ENCODE measurements at regions of chr2 and their contacts with region 1.

Region 1: GRCh38 chr2:219177552-219178376 is at the start of gene RETREG2:
- DNase-seq: peak; percentile 61 to 96 (median 78)
- ATAC-seq: peak; percentile 55
- H3K4me3 ChIP-seq: peak within 1 kb of the TSS; percentile 71 to 82
- H3K4me3 Mint-ChIP-seq: peak within 1 kb of the TSS; percentile 91
- H3K27ac ChIP-seq: peak within 1 kb of the TSS; percentile 97 to 98
- H3K27ac Mint-ChIP-seq: peak within 1 kb of the TSS; percentile 99
- H3K4me1 ChIP-seq: peaks cover 75% of the 10 kb centered on the region
- H3K4me1 Mint-ChIP-seq: peaks cover 75% of the 10 kb centered on the region
- H3K27me3 ChIP-seq: no peaks in the 10 kb centered on the region
- H3K27me3 Mint-ChIP-seq: no peaks in the 10 kb centered on the region
- CTCF ChIP-seq: no peak
- total RNA-seq, gene RETREG2: 76.7 to 79.0 TPM

Region 2: DNA sequence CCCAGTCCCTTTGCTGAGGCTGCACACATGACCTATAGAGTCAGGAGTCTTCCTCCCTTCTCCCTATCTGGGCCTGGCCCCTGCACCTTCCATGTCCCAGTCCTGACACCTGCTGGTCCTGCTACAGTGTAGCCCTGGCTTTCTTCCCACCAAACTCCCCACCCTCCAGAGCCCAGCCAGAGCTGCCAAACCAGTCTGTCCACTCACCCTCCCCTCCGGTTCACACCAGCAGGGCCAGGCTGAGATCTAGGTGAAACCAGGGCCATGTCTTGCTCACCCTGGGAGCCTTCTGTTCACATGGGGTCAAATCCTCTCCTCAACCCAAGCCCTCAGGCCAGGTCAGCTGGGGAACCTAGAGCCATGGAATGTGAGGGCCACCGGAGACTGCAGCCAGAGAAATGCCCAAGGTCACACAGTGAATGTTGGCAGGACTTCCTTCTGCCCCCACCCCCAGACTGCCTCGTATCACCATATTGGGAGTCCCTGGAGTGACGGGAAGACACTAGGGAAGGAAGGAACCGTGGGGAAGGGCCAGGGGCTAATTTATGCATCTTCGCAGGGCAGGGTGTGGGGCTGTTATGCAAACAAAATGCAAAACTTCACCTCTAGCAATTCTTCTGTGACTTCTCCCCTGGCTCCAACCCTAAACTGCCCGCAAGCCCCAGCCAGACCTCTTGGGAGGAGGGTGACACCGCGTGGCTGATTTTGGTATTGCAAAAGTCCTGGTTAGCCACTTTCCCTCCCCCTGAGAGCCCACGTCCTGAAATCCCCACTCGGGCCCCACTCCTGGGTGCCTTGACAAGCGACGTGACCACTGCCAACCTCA is 1189.5 kb before region 1 on chr2:
- CTCF ChIA-PET with region 1: no interaction called
- POLR2A ChIA-PET with region 1: no interaction called
- intact Hi-C with region 1: no loop called
- DNase-seq: peak; percentile 23 to 67 (median 52)
- ATAC-seq: peak; percentile 56
- H3K4me3 ChIP-seq: no peak overlapping the region
- H3K4me3 Mint-ChIP-seq: no peak overlapping the region
- H3K27ac ChIP-seq: no peak overlapping the region
- H3K27ac Mint-ChIP-seq: no peak overlapping the region
- H3K4me1 ChIP-seq: no peaks in the 10 kb centered on the region
- H3K4me1 Mint-ChIP-seq: no peaks in the 10 kb centered on the region
- H3K27me3 ChIP-seq: no peaks in the 10 kb centered on the region
- H3K27me3 Mint-ChIP-seq: peaks cover 13% of the 10 kb centered on the region
- CTCF ChIP-seq: peak; percentile 64

Region 3: DNA sequence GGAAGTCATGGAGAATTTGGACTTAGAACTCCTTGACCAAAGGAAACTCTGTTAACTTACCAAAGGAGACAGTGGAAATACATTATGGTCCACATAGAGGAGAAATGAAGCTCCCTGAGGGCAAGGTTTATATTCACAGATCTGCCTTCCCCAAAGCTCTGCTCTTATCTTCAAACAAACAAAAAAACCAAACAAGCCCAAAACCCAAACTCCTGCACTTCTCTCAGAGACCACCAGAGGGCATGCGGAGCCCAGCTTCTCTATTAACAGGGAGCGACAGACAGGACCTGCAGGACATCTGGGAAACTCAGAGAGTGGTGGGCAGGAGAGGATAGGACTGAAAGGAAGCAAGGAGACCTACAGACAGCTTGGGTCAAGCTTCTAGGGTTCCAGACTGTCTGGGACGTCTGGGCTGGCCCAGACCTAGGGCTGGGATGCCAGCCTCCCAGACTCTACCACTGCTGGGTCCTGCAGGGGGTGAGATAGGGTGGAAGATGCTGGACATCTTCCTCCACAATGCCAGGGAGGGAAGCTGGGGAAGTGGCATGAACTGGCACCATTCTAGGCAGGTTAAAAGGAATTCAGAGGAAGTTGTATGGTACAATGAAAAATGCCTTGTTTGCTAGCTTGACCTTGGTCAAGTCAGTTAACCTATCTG is 301.1 kb before region 1 on chr2:
- CTCF ChIA-PET with region 1: no interaction called
- POLR2A ChIA-PET with region 1: no interaction called
- intact Hi-C with region 1: loop called in 1 of 2 experiments (anchors 5 kb)
- DNase-seq: peak; percentile 61 to 86 (median 78)
- ATAC-seq: no peak
- H3K4me3 ChIP-seq: no peak overlapping the region
- H3K4me3 Mint-ChIP-seq: no peak overlapping the region
- H3K27ac ChIP-seq: no peak overlapping the region
- H3K27ac Mint-ChIP-seq: no peak overlapping the region
- H3K4me1 ChIP-seq: peaks cover 59% of the 10 kb centered on the region
- H3K4me1 Mint-ChIP-seq: peaks cover 41% of the 10 kb centered on the region
- H3K27me3 ChIP-seq: peaks cover 16 to 30% of the 10 kb centered on the region in 2 experiments
- H3K27me3 Mint-ChIP-seq: peaks cover 34% of the 10 kb centered on the region
- CTCF ChIP-seq: peak; percentile 99

Region 4: GRCh38 chr2:219002395-219003266 is 175.1 kb before region 1 on chr2:
- CTCF ChIA-PET with region 1: no interaction called
- POLR2A ChIA-PET with region 1: no interaction called
- intact Hi-C with region 1: no loop called
- DNase-seq: peak in 5 of 9 experiments; percentile 40 to 67 (median 56)
- ATAC-seq: peak; percentile 69
- H3K4me3 ChIP-seq: peak overlapping the region; percentile 15 to 41
- H3K4me3 Mint-ChIP-seq: peak overlapping the region; percentile 79
- H3K27ac ChIP-seq: no peak overlapping the region
- H3K27ac Mint-ChIP-seq: no peak overlapping the region
- H3K4me1 ChIP-seq: peaks cover 25% of the 10 kb centered on the region
- H3K4me1 Mint-ChIP-seq: peaks cover 15% of the 10 kb centered on the region
- H3K27me3 ChIP-seq: peaks cover 26 to 34% of the 10 kb centered on the region in 2 experiments
- H3K27me3 Mint-ChIP-seq: peaks cover 64% of the 10 kb centered on the region
- CTCF ChIP-seq: peak; percentile 48

Region 5: DNA sequence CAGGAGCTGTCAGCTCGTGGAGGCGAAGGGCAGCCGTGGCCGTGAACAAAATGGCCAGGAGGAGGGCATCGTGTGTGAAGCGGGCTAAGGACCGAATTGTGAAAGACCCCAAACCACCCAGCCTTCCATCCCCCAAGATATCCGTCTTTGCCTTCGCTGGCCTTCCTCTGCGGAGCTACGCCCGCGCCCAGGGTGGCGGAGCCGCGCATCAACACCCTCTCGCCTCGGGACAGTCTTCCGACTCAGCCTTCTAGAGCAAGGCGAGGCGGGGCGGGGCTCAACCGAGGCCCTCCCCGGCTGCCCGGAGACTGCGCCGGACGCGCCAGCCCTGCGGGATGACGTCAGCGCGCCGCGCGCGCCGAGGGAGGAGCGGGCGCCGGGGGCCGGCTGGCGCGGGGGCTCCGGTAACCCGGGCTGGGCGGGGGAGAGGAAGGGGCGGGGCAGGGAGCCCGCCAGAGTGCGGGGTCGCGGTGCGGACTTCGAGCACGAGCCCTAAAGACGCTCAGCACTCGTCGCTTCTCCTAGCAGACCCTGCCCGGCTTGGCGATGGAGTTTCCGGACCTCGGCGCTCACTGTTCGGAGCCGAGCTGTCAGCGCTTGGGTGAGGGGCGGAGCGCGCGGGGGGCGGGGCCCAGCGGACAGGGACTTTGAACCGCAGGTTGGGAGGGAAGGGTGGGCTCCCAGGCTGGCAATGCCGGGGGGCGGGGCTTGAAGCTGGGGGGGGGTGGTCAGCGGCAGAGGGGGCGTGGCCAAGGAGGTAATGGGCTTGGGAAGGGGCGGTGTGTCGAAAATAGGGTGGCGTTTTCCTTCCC is 28.9 kb after region 1 on chr2 and contains the start of gene ZFAND2B:
- CTCF ChIA-PET with region 1: interaction called, 215 read pairs
- POLR2A ChIA-PET with region 1: interaction called, 95 read pairs
- intact Hi-C with region 1: loop called (anchors 1 kb)
- DNase-seq: peak; percentile 91 to 99 (median 96)
- ATAC-seq: peak; percentile 88
- H3K4me3 ChIP-seq: peak within 1 kb of the TSS; percentile 63 to 68
- H3K4me3 Mint-ChIP-seq: peak within 1 kb of the TSS; percentile 95
- H3K27ac ChIP-seq: peak within 1 kb of the TSS; percentile 87 to 88
- H3K27ac Mint-ChIP-seq: peak within 1 kb of the TSS; percentile 99
- H3K4me1 ChIP-seq: peaks cover 48% of the 10 kb centered on the region
- H3K4me1 Mint-ChIP-seq: peaks cover 46% of the 10 kb centered on the region
- H3K27me3 ChIP-seq: no peaks in the 10 kb centered on the region
- H3K27me3 Mint-ChIP-seq: no peaks in the 10 kb centered on the region
- CTCF ChIP-seq: no peak
- total RNA-seq, gene ZFAND2B: 74.3 to 78.7 TPM

Region 6: DNA sequence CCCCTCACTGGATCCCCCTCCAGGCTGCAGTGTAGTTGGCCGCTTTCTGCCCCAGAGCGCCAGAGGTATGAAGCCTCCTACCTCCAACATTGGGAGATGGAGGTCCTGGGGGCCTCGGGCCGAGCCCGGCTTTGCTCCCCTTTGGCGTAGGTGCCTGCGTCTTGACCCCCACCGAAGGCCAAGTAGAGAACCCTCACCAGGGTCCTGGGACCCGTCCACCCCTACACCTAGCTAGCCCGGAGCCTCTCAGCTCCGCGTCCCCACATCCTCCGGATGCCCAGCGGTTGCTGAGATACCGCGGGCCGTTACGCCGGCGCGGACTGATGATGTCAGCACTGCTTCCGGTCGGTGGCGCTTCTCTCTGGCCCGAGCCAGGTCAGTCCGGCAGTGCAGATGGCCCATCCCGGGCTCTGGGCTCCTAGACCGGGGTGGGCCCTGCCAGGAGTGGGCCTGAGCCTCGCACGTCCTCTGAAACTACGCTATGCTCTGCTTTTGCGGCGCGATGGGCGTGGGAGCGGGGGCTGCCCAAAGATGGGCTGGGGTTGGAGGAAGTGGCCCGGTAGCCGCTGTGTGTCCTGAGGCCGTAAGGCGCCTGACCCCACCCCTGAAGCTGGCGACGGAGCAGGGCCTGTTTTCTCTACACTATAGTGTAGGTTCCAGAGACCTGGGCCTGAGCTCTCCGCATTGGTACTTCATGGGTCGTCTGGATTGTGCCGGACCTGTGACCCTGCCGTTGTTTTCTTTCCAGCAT is 67.6 kb after region 1 on chr2 and contains the starts of genes GLB1L and STK16:
- CTCF ChIA-PET with region 1: interaction called, 4 read pairs
- POLR2A ChIA-PET with region 1: interaction called, 20 read pairs
- intact Hi-C with region 1: loop called (anchors 1 to 2 kb)
- DNase-seq: peak; percentile 67 to 94 (median 87)
- ATAC-seq: peak; percentile 37
- H3K4me3 ChIP-seq: peak within 1 kb of the TSS; percentile 68 to 94
- H3K4me3 Mint-ChIP-seq: peak within 1 kb of the TSS; percentile 94
- H3K27ac ChIP-seq: peak within 1 kb of the TSS; percentile 89 to 96
- H3K27ac Mint-ChIP-seq: peak within 1 kb of the TSS; percentile 99
- H3K4me1 ChIP-seq: peaks cover 58% of the 10 kb centered on the region
- H3K4me1 Mint-ChIP-seq: peaks cover 68% of the 10 kb centered on the region
- H3K27me3 ChIP-seq: no peaks in the 10 kb centered on the region
- H3K27me3 Mint-ChIP-seq: no peaks in the 10 kb centered on the region
- CTCF ChIP-seq: no peak
- total RNA-seq, gene GLB1L: 1.7 to 2.8 TPM
- total RNA-seq, gene STK16: 12.9 to 13.2 TPM

Region 7: DNA sequence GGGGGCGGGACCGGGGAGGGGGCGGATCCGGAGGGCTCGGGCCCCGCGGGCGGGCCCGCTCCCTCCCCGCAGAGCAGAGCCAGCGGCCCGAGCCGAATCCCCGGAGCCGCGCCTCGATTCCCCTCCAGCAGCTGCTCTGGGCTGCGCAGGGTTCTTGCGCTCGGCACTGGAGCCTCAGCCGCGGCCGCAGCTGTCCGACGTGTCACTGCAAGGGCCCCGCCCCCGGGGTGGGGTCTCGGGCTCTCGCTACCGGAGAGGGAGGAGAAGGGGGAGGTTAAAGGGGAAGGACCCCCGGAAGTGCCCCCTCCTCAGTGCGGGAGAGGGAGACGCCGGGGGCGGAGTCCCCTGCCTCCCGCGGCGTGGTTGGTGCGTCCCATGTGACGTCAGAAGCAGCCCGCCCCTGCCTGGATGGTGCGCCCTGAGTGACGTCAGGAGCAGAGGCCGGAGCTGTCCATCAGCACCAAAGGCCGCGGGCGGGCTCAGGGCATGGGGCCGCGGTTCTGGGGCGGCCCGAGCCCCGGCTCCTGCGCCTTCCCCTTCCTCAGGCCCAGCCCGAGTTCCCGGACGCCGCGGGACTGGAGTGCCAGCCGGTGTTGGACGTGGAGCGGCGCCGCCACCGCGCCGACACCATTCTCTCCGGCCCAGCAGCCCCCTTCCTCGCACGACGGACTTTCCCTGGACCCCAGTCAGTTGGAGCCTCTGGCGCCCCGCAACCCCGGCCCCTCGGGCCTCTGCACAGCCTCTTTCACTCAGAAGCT is 366.0 kb after region 1 on chr2 and contains the starts of genes CHPF and TMEM198:
- CTCF ChIA-PET with region 1: no interaction called
- POLR2A ChIA-PET with region 1: no interaction called
- intact Hi-C with region 1: loop called (anchors 1 to 5 kb)
- DNase-seq: peak; percentile 82 to 95 (median 90)
- ATAC-seq: peak; percentile 69
- H3K4me3 ChIP-seq: peak within 1 kb of the TSS; percentile 66 to 80
- H3K4me3 Mint-ChIP-seq: peak within 1 kb of the TSS; percentile 87
- H3K27ac ChIP-seq: peak within 1 kb of the TSS; percentile 61 to 73
- H3K27ac Mint-ChIP-seq: peak within 1 kb of the TSS; percentile 84
- H3K4me1 ChIP-seq: peaks cover 18% of the 10 kb centered on the region
- H3K4me1 Mint-ChIP-seq: peaks cover 25% of the 10 kb centered on the region
- H3K27me3 ChIP-seq: no peaks in the 10 kb centered on the region
- H3K27me3 Mint-ChIP-seq: peaks cover 12% of the 10 kb centered on the region
- CTCF ChIP-seq: no peak
- total RNA-seq, gene CHPF: 5.2 to 6.2 TPM
- total RNA-seq, gene TMEM198: 0.31 to 0.46 TPM